ENCODE measurements at regions of chr11 and their contacts with region 1.

Region 1: DNA sequence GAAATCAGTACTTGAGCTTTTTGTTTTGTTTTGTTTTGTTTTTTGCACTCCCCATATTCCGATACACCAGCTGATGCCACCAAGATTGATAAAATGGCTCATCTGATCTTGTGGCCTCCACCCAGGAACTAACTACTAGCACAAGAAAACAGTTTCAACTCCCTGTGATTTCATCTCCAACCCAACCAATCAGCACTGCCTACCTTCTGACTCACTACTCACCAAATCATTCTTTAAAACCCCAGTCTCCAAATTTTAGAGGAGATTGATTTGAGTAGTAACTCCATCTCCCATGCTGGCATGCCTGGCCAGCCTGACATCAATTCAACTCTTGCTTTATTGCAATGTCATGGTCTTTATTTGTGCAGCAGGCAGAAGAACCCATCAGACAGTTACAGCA is 16.1 kb upstream of the CRTAM start:
- DNase-seq: no peak
- CTCF ChIP-seq: no peak

Region 2: DNA sequence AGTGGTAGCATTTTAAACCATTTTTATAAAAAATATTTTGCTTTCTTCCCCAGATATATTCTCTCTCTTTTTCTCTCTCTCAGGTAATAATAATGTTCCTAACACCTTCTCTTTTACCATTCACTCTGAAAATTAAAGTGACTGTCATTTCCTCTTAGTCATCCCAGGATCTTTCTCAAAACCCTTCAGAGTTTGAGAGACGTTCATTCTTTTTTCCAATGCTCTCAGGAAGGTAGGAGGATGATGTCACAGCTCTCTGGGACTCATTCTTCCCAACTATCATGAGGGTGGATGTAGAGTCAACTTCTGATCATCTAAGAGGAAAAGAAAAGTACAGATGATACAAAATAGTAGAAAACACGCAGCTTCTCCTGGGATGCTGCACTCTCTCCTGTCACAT is 44.1 kb before region 1 on chr11:
- CTCF ChIA-PET with region 1: no interaction called
- POLR2A ChIA-PET with region 1: no interaction called
- DNase-seq: no peak
- CTCF ChIP-seq: no peak

Region 3: GRCh38 chr11:122788781-122789535 is 33.3 kb before region 1 on chr11:
- CTCF ChIA-PET with region 1: no interaction called
- POLR2A ChIA-PET with region 1: no interaction called
- DNase-seq: no peak
- CTCF ChIP-seq: no peak

Region 4: DNA sequence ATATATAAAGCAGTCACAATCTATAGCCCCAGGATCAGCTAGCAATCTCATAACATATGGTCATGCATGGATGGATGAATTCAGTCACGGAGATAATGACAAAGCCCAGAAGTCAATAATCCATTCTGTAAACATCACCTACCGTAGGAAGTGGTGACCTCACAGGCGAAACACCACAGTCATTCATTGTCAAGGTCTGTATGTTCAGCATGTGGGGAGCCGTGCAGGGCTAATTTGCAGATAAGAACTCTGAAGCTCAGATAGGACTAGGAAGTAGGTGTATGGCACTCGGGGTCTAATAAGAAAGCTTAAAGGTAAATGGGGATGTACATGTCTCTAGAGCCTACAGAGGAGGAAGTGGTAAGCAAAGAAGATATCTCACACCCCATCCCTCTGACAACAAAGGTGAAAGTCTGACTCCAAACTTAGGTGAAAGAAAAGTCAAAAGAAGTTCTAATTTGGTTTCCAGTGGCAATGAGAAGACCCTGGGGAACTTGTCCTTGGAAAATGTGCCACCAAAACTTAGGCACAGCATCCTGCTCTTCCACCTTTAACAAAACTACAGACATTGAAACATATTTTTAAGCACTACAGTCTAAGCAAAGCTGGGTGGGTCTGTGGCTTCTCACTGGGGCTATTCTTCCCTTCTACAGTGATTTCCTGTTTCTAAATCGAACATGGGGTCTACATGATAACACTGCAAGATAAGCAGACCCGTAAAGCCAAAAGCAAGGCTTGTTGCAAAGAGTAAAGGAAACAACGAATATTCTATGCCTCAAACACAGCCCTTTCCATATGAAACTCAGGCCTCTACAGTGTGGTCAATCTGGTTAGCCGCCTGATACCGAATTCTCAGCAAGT is 21.3 kb after region 1 on chr11:
- CTCF ChIA-PET with region 1: interaction called, 10 read pairs
- POLR2A ChIA-PET with region 1: no interaction called
- DNase-seq: peak; percentile 26
- CTCF ChIP-seq: no peak

Measured in GM10248 (cell line).